OCI-LY7 (cell line): ENCODE measurements at regions of chrX and their contacts with region 1.

Region 1: GRCh38 chrX:1453951-1454785 is 1.5 kb upstream of the ASMTL start:
- DNase-seq: peak; percentile 91
- H3K4me3 ChIP-seq: peak overlapping the region; percentile 68
- H3K27ac ChIP-seq: peak overlapping the region; percentile 58
- H3K4me1 ChIP-seq: peaks cover 49% of the 10 kb centered on the region
- CTCF ChIP-seq: peak; percentile 93

Region 2: DNA sequence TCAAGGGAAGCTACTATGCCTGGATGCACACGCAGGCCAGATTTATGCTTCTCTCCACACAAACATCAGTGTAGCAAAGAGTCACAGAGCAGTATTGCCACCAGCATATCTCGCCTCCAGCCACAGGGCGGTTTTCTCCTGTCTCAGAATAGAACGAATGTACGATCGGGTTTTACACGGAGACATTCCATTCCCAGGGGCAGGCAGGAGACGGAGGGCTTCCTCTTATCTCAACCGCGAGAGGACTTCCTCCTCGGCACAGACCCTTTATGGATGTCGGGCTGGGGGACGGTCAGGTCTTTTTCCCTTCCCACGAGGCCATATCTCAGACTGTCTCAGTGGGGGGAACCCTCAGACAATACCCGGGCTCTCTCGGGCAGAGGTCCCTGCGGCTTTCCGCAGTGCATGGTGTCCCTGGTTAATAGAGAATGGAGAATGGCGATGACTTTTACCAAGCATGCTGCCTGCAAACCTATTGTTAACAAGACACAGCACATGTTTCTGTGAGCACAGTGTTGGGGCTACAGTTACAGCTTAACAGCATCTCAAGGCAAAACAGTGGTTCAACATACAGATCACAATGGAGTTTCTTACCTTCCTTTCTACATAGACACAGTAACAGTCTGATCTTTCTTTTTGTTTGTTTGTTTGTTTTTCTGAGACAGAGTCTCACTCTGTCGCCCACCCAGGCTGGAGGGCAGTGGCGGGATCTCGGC is 161.4 kb before region 1 on chrX:
- CTCF ChIA-PET with region 1: no interaction called
- POLR2A ChIA-PET with region 1: no interaction called
- intact Hi-C with region 1: no loop called
- DNase-seq: no peak
- H3K4me3 ChIP-seq: no peak overlapping the region
- H3K27ac ChIP-seq: no peak overlapping the region
- H3K4me1 ChIP-seq: no peaks in the 10 kb centered on the region
- CTCF ChIP-seq: no peak

Region 3: DNA sequence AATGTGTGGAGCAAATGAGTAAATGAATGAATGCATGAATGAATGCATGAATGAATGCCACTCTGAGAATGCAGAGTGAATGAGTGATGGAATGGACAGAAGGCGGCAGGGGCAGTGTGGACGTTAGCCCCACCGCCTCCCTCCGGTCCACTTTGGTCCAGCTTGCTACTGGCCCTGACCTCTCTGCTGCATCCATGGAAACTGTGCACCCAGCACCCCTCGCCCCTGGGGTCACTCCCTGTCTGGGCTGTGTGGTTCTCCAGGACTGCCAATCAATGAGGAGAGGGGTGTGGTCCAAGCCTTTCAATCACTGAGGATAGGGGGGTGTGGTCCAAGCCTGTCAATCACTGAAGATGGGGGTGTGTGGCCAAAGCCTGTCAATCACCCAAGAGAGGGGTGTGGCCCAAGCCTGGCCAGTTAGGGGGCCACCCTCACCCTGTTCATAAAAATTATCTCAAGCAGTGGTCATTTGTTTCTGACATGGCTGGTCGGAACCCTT is 37.7 kb after region 1 on chrX:
- CTCF ChIA-PET with region 1: no interaction called
- POLR2A ChIA-PET with region 1: no interaction called
- intact Hi-C with region 1: loop called (anchors 5 kb)
- DNase-seq: peak; percentile 97
- H3K4me3 ChIP-seq: peak overlapping the region; percentile 73
- H3K27ac ChIP-seq: peak overlapping the region; percentile 88
- H3K4me1 ChIP-seq: peaks cover 60% of the 10 kb centered on the region
- CTCF ChIP-seq: no peak

Region 4: GRCh38 chrX:1528186-1528883 is 74.2 kb after region 1 on chrX:
- CTCF ChIA-PET with region 1: no interaction called
- POLR2A ChIA-PET with region 1: no interaction called
- intact Hi-C with region 1: no loop called
- DNase-seq: no peak
- H3K4me3 ChIP-seq: no peak overlapping the region
- H3K27ac ChIP-seq: no peak overlapping the region
- H3K4me1 ChIP-seq: peaks cover 19% of the 10 kb centered on the region
- CTCF ChIP-seq: no peak

Region 5: GRCh38 chrX:1580735-1581531 is 126.8 kb after region 1 on chrX:
- CTCF ChIA-PET with region 1: no interaction called
- POLR2A ChIA-PET with region 1: no interaction called
- intact Hi-C with region 1: loop called (anchors 1 kb)
- DNase-seq: peak; percentile 85
- H3K4me3 ChIP-seq: no peak overlapping the region
- H3K27ac ChIP-seq: no peak overlapping the region
- H3K4me1 ChIP-seq: peaks cover 16% of the 10 kb centered on the region
- CTCF ChIP-seq: peak; percentile 90

Region 6: GRCh38 chrX:1784773-1785172 is 330.6 kb after region 1 on chrX:
- CTCF ChIA-PET with region 1: no interaction called
- POLR2A ChIA-PET with region 1: no interaction called
- intact Hi-C with region 1: no loop called
- DNase-seq: no peak
- H3K4me3 ChIP-seq: no peak overlapping the region
- H3K27ac ChIP-seq: no peak overlapping the region
- H3K4me1 ChIP-seq: no peaks in the 10 kb centered on the region
- CTCF ChIP-seq: peak; percentile 71

Region 7: GRCh38 chrX:1807301-1807731 is 353.1 kb after region 1 on chrX:
- CTCF ChIA-PET with region 1: no interaction called
- POLR2A ChIA-PET with region 1: no interaction called
- intact Hi-C with region 1: no loop called
- DNase-seq: no peak
- H3K4me3 ChIP-seq: no peak overlapping the region
- H3K27ac ChIP-seq: no peak overlapping the region
- H3K4me1 ChIP-seq: no peaks in the 10 kb centered on the region
- CTCF ChIP-seq: no peak

Region 8: GRCh38 chrX:2516626-2517025 is 1062.5 kb after region 1 on chrX:
- CTCF ChIA-PET with region 1: no interaction called
- POLR2A ChIA-PET with region 1: no interaction called
- intact Hi-C with region 1: loop called (anchors 10 kb)
- DNase-seq: peak; percentile 91
- H3K4me3 ChIP-seq: peak overlapping the region; percentile 52
- H3K27ac ChIP-seq: peak overlapping the region; percentile 98
- H3K4me1 ChIP-seq: peaks cover 86% of the 10 kb centered on the region
- CTCF ChIP-seq: no peak

Region 9: GRCh38 chrX:2608638-2609430 is 1154.7 kb after region 1 on chrX:
- CTCF ChIA-PET with region 1: no interaction called
- POLR2A ChIA-PET with region 1: no interaction called
- intact Hi-C with region 1: loop called (anchors 5 kb)
- DNase-seq: peak; percentile 85
- H3K4me3 ChIP-seq: peak overlapping the region; percentile 93
- H3K27ac ChIP-seq: peak overlapping the region; percentile 51
- H3K4me1 ChIP-seq: peaks cover 21% of the 10 kb centered on the region
- CTCF ChIP-seq: peak; percentile 41; the same call in 1 of the 2 replicates